Activated T-helper 2 cell treated with anti-CD3 and anti-CD28 coated beads, Interferon-gamma antibody, Interleukin-2, Interleukin-4, amounts not matched to agents 10 μg/mL and 5 μg/mL and 100 μg/mL, durations not matched to agents 14 hours and 24 hours and 36 hours (primary cell): ENCODE measurements at regions of chr5 and their contacts with region 1.

Region 1: DNA sequence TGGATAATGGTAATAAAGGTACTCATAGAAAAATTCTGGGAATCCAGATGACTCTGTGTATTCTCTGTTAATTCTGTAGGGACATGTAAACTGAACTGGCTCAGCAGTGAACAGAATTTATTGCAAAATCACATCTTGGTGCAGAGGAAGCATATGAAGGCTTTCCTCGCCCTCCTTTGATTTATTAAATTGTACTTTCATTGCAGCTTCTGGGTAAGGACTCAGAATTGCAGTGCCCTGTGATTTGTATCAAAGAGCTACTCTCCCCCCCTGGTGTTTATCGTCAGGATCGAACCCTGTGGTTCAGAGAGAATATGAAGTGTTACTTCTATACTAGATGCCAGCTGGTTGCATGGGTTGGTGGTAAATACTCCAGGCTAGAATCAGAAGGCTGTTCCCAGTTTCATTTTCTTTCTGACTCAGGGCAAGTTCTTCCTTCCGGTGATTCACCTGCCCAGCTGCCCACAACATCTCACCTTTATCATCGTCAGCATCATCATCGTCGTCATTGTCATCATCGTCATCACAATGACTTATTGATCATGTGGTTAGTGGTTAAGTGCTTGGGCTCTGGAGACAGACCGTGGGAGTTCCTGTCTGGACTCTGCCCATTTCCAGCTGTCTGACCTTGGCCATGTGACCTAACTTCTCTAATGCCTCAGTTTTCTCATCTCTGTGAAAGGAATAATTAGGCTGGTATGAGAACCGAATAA is 238.8 kb downstream of the ARHGAP26 start:
- DNase-seq: peak; percentile 82
- H3K4me3 Mint-ChIP-seq: peak overlapping the region; percentile 9
- H3K27ac Mint-ChIP-seq: peak overlapping the region; percentile 80
- H3K4me1 Mint-ChIP-seq: peaks cover 76% of the 10 kb centered on the region
- H3K27me3 Mint-ChIP-seq: no peaks in the 10 kb centered on the region

Region 2: DNA sequence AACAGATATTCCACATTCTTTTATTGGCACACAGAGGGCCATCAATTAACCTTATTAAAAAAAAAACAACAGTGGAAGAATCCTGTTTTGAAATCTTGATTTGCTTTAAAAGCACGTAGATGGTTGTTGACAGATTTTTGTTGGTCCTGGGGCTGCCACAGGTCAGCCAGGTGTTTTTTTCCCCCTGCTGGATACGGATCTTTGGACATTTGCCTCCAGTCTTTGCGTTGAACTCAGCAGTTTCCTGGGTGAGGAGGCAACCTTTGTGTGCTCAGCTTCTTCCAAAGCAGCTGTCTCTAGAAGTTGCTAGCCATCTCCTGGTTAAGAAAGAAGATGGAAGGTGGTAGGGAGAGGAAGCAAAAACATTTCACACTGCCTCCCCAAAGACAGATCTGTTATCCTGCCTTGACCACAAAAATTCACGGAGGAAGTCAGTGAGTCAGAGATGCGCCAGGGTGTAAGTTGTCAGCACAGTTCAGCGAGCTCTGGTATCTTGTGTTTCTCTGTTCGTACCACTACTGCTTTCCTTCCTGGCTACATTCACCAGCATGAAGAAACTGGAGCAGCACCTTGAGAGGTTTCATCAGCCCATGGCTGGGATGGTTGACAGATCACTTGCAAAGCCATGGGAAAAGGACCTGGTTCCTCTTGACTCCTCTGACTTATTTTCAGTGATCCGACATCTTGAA is 31.5 kb before region 1 on chr5:
- intact Hi-C with region 1: loop called (anchors 2 kb)
- DNase-seq: peak; percentile 37
- H3K4me3 Mint-ChIP-seq: peak overlapping the region; percentile 26
- H3K27ac Mint-ChIP-seq: peak overlapping the region; percentile 84
- H3K4me1 Mint-ChIP-seq: peaks cover 53% of the 10 kb centered on the region
- H3K27me3 Mint-ChIP-seq: no peaks in the 10 kb centered on the region

Region 3: DNA sequence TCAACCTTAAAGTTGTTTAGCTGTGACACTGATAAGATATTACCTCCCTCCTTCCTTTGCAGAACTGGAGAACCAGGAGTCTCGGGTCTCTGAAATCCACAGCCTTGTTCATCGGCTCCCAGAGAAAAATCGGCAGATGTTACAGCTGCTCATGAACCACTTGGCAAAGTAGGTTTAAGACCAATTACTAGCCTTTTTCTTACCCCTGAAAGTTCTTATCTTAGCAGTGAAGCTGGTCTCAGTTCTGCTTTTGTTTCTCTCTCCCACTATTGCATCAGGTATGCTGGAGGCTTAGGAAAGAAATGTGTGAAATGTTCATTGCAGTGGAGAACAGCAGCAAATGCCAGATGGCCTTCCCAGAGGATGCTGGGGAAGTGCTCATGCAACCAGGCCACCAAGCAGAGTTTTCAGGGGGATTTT is 48.6 kb after region 1 on chr5:
- intact Hi-C with region 1: loop called (anchors 1 kb)
- DNase-seq: no peak
- H3K4me3 Mint-ChIP-seq: no peak overlapping the region
- H3K27ac Mint-ChIP-seq: peak overlapping the region; percentile 96
- H3K4me1 Mint-ChIP-seq: peaks cover 67% of the 10 kb centered on the region
- H3K27me3 Mint-ChIP-seq: no peaks in the 10 kb centered on the region

Region 4: DNA sequence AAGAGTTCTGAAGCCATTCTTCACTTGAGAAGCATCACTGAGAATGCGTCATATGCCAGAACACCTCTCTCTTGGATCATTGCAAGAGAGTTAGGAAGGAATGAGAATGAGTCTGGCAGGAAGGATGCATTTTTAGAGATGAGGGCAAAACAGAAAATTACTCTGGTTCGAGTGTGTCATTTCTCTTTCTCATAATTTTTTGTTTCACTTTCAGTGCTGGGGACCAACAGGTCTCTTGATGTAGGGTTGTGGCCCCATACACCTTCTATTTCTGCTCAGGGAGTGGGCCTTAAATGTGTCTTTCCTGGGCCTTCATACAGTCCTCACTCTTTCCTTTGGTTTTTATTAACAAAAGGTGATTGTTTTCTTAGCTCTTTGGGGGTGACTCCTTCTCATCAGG is 92.2 kb after region 1 on chr5:
- intact Hi-C with region 1: loop called (anchors 1 kb)
- DNase-seq: no peak
- H3K4me3 Mint-ChIP-seq: peak overlapping the region; percentile 52
- H3K27ac Mint-ChIP-seq: peak overlapping the region; percentile 95
- H3K4me1 Mint-ChIP-seq: peaks cover 48% of the 10 kb centered on the region
- H3K27me3 Mint-ChIP-seq: no peaks in the 10 kb centered on the region

Region 5: GRCh38 chr5:143222287-143223231 is 213.6 kb after region 1 on chr5:
- intact Hi-C with region 1: loop called (anchors 2 kb)
- DNase-seq: peak; percentile 74
- H3K4me3 Mint-ChIP-seq: peak overlapping the region; percentile 43
- H3K27ac Mint-ChIP-seq: peak overlapping the region; percentile 97
- H3K4me1 Mint-ChIP-seq: peaks cover 82% of the 10 kb centered on the region
- H3K27me3 Mint-ChIP-seq: no peaks in the 10 kb centered on the region

Region 6: GRCh38 chr5:143652108-143652700 is 643.2 kb after region 1 on chr5:
- intact Hi-C with region 1: loop called (anchors 5 kb)
- DNase-seq: no peak
- H3K4me3 Mint-ChIP-seq: no peak overlapping the region
- H3K27ac Mint-ChIP-seq: no peak overlapping the region
- H3K4me1 Mint-ChIP-seq: peaks cover 21% of the 10 kb centered on the region
- H3K27me3 Mint-ChIP-seq: peaks cover 2% of the 10 kb centered on the region

Region 7: DNA sequence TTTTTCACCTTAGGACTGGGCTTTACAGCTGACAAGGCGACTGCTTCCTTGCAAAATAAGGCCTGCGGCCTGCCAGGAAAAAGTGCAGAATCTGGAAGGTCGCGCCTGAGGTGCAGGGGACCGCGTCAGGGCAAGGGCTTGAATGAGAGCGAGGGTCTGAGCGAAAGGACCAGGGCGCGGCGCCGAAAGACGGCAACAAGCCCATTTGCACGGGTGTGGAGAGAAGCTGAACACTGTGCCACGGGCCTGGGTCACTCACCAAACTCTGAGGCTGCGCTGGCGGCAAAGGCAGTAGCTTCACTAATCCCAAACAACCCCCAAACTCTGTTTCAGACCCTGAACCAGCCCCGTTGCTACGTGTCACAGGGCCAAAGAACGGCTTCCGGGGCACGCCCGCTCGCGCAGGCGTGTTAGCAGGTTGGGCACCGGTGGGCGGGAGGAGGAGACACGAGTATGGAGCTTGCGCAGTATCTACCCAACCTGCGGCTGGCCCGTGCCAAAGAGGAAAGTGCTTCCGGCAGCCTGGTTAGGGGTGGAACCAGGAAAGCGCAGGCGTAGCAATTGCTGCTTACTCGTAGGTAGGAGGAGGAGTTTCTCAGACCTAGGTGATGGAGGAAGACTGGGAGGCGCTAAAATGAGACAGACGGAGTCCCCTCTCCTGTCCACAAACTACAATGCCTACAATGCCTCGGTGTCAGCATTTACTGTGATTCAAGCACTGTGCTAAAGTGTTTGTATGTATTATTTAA is 1161.5 kb after region 1 on chr5 and contains the starts of genes KCTD16 and YIPF5:
- intact Hi-C with region 1: loop called (anchors 5 kb)
- DNase-seq: peak; percentile 96
- H3K4me3 Mint-ChIP-seq: peak within 1 kb of the TSS; percentile 99
- H3K27ac Mint-ChIP-seq: peak within 1 kb of the TSS; percentile 93
- H3K4me1 Mint-ChIP-seq: peaks cover 34% of the 10 kb centered on the region
- H3K27me3 Mint-ChIP-seq: peaks cover 12% of the 10 kb centered on the region
- total RNA-seq, gene KCTD16: not detected in 2 replicates
- total RNA-seq, gene YIPF5: 34.0 and 34.2 TPM in 2 replicates